ENCODE measurements at regions of chr20 and their contacts with region 1.

Region 1: DNA sequence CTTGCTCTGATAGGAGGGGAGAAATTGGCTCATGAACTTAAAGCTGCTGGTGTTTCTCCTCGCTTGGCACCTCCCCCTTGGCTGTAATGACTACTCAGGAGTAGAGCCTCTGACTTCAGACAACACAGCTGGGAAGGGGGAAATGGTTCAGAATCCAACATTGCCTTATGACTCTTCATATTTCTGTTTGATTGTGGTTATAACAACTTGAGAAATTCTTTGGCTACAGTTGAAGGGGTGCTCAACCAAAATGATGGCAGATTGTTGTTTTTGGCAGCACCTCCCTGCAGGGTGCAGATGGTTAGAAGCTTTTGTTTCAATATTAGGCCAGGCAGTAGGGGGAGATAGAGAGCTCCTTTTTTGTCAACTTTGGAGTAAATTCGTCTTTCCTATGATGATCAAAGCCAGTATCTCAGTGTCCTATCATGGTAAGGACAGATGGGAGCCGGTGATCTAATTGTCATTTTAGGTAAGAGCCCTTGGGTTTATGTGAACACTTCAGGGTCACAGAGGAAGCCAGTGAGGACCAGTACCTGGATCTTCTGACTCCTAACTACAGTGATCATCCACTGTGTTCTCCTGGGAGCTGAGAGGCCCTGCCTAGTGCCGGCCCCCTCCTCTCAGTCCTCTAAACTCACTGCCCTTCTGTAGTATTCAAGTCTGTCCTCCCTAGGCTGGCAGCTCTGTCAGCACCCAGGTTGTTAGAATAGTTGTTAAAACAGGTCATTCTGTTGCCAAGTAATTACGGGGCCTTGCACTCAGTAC is 39.9 kb downstream of the RPRD1B start:
- DNase-seq: peak; percentile 60

Region 2: DNA sequence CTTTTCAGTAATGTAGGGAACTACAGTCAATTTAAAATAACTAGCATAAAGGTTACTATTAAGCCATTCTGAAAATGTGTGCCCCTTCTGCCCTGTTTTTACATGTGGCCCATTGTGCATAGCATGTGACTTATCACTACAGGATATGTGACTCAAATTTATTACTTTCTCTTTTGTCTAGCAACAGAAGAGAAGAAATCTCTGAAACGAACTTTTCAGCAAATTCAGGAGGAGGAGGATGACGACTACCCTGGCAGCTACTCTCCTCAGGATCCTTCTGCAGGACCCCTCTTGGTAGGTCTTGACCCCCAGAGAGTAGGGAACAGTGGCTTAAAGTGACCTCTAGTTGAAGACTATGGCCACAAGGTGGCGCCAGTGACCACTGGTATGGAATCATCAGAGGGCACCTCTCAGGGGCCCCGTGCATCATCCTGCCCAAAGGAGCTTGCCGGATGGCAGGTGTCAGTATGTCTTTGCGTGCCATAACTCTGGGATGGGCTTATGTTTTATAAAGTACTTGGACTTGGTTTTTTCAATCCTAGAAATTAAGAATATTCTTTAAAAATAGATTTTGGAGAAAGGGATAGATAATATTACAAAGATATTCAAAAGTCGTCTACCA is 16.0 kb before region 1 on chr20:
- CTCF ChIA-PET with region 1: interaction called, 10 read pairs
- POLR2A ChIA-PET with region 1: interaction called, 3 read pairs
- DNase-seq: peak; percentile 80

Region 3: GRCh38 chr20:38084400-38084951 is 11.0 kb after region 1 on chr20:
- CTCF ChIA-PET with region 1: interaction called, 12 read pairs
- POLR2A ChIA-PET with region 1: no interaction called
- DNase-seq: no peak

Measured in HEK293T (cell line).